Gastrocnemius medialis (tissue), 4 donors: ENCODE measurements at regions of chr3 and their contacts with region 1.

Region 1: DNA sequence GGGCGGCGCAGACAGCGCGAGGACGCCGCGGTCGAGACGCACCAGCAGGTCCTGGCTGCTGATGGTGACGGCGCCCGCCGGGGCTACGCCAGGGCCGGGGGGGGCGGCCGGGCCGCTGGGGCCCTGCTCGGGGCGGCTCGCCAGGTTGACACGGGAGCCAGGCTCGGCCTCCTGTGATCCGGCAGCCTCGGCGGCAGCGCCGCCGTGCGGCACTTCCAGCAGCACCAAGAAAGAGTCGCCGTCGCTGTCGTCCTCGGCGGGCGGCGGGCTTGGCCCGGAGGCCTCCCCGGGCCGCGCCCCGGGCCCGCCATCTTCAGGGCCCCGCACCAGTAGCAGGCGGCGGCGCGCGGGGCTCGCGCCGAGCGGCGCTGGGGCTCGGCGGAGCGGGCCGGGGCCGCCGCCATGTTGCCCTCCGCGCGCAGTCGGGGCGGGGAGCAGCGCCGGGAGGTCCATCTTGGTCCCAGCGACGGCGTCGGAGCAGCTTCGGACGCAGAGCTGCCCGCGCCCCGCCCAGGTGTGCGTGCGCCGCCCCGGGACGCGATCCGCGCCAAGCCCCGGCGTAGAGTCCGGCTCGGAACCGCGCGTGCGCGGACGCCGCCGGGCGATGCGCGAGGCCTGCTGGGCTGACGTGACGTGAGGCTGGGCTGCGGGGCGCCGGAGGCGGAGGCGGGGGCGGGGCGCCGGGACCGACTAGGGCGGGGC is at the start of gene ZXDC:
- DNase-seq: peak; percentile 88 to 94
- ATAC-seq: peak; percentile 64 to 67
- H3K4me3 ChIP-seq: peak within 1 kb of the TSS; percentile 70 to 93 (median 72)
- H3K27ac ChIP-seq: peak within 1 kb of the TSS; percentile 95 to 97 (median 96)
- H3K4me1 ChIP-seq: peaks cover 41 to 46% of the 10 kb centered on the region in 2 donors
- H3K27me3 ChIP-seq: no peaks in the 10 kb centered on the region
- CTCF ChIP-seq: peak; percentile 18 to 68 (median 67)
- POLR2A ChIP-seq: peak; percentile 93 to 95
- total RNA-seq, gene ZXDC: 40.9 to 54.2 (median 45.4) TPM

Region 2: DNA sequence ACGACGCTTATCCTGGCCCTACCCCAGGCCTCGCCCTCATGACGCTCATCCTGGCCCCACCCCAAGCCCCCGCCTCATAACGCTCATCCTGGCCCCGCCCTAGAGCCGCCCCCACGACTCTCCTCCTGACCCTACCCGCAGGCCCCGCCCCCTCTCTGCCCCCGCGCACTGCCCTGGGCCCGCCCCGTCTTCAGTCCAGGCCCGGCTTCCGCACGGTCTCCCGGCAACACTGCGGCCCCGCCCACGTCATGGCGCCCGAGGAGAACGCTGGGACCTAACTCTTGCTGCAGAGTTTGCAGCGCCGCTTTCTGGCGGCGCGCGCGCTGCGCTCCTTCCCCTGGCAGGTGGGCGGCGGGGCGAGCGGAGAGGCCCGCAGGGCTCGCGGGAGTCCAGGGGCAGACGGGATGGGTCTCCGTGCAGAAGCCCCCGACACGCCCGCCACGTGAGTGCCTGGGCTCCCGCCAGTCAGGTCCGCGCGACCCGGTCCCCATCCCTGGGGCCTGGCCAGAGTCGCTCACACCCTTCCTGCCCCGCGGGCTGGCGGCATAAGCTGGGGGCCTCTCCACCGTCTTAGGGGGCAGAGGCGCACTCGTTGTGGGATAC is 559.1 kb before region 1 on chr3:
- in situ Hi-C with region 1: no loop called
- intact Hi-C with region 1: loop called (anchors 10 kb)
- DNase-seq: no peak
- ATAC-seq: peak; percentile 79 to 85
- H3K4me3 ChIP-seq: peak overlapping the region; percentile 71 to 98 (median 84)
- H3K27ac ChIP-seq: peak overlapping the region; percentile 83 to 91 (median 90)
- H3K4me1 ChIP-seq: peaks cover 4 to 8% of the 10 kb centered on the region in 2 donors
- H3K27me3 ChIP-seq: no peaks in the 10 kb centered on the region
- CTCF ChIP-seq: peak in 2 of 5 experiments; percentile 21 to 28
- POLR2A ChIP-seq: no peak

Region 3: GRCh38 chr3:126259411-126260391 is 215.9 kb before region 1 on chr3:
- in situ Hi-C with region 1: loop called in 2 of 4 experiments (anchors 10 kb)
- intact Hi-C with region 1: loop called (anchors 1 kb)
- DNase-seq: peak; percentile 88 to 93
- ATAC-seq: peak; percentile 94 to 95
- H3K4me3 ChIP-seq: peak overlapping the region; percentile 26 to 44 (median 36)
- H3K27ac ChIP-seq: peak overlapping the region; percentile 80 to 92 (median 89)
- H3K4me1 ChIP-seq: peaks cover 25 to 30% of the 10 kb centered on the region in 2 donors
- H3K27me3 ChIP-seq: no peaks in the 10 kb centered on the region
- CTCF ChIP-seq: peak; percentile 81 to 97 (median 94)
- POLR2A ChIP-seq: peak; percentile 51 to 63

Region 4: DNA sequence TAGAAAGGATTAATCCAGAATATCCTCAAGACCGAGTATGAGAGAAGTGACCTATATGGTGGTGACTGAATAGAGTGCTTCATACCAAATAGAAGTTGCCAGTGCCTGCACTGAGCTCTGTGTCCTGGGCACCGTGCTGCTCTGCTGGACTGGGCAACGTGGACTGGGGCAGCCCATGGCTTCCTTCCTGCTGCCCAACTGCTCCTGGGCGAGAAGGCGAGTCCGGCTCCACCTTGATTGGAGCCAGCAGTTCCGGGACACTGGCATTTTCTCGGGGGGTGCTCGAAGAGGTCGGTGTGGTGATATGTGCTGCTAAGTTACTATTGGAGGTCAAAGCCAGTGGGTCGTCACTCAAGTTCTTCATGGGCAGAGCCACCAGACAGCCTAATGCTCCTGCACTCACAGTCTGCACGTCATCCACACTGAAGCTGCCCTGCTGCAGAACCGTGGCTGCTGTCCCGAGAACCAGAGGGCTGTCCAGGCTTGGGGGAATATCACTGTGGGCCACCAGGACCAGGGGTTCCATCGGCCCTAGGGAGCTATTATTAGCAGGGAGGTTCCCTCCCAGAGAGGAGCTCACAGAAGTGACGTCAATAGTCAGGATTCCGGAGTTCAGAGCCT is 14.0 kb before region 1 on chr3:
- in situ Hi-C with region 1: no loop called
- intact Hi-C with region 1: loop called (anchors 1 kb)
- DNase-seq: no peak
- ATAC-seq: peak; percentile 3
- H3K4me3 ChIP-seq: no peak overlapping the region
- H3K27ac ChIP-seq: peak overlapping the region; percentile 94 to 97 (median 96)
- H3K4me1 ChIP-seq: peaks cover 71 to 74% of the 10 kb centered on the region in 2 donors
- H3K27me3 ChIP-seq: no peaks in the 10 kb centered on the region
- CTCF ChIP-seq: no peak
- POLR2A ChIP-seq: no peak